Activated T-helper 2 cell treated with anti-CD3 and anti-CD28 coated beads, Interferon-gamma antibody, Interleukin-2, Interleukin-4, amounts not matched to agents 10 μg/mL and 5 μg/mL and 100 μg/mL, durations not matched to agents 14 hours and 24 hours and 36 hours (primary cell): ENCODE measurements at regions of chr22 and their contacts with region 1.

Region 1: DNA sequence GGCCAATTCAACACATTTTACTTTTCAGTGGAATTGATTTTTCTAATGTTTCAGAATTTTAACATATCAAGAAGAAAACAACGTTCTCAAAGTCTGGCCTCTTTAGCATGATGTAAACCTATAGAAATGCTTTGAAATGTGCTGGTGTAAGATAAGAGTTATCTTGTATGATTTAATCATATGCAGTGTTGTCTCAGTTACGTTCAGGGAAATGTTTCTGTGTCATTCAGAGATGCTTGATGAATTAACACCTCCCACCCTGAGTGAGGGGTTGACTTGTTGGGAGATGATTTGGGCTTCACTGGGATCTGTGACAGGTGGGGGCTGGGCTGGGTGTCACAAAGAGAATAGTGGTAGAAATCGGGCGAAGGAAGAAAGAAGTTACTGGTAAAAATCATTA is 15.7 kb upstream of the MYO18B start:
- DNase-seq: no peak
- H3K4me3 Mint-ChIP-seq: peak overlapping the region; percentile 24
- H3K27ac Mint-ChIP-seq: peak overlapping the region; percentile 96
- H3K4me1 Mint-ChIP-seq: peaks cover 42% of the 10 kb centered on the region
- H3K27me3 Mint-ChIP-seq: no peaks in the 10 kb centered on the region

Region 2: DNA sequence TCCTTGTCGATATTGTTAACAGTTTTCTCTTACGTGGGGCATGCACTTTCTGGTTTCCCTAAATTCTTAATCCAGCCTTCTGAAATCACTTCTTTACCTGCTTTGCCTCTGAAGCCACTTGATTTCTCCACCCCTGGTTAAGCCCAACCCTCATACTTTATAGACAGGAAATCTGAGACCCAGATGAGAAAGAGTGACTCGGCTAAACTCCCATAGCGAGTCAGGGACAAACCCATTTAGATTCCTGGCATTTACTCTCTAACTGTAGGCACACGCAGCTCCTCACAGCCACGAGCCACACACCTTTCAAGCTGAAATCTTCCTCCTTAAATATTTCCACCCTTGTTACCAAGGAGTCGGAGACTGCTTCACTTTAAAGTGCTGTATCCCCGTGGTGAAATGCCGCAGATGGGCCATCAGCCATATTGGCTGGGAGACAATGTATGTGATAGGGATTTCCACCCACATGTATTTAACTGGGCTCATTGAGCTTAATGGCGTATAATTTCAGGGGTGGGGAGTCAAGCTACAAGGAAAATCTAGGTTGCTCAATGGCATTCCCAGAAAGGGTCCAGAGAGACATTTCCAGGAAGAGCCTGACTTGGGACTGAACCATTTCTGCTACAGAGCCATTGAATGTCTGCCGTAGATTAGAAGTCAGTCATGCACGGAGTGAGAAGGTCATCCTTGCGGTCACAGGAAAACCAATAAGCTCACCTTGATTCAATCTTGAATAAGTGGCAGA is 211.6 kb before region 1 on chr22:
- intact Hi-C with region 1: no loop called
- DNase-seq: no peak
- H3K4me3 Mint-ChIP-seq: no peak overlapping the region
- H3K27ac Mint-ChIP-seq: no peak overlapping the region
- H3K4me1 Mint-ChIP-seq: no peaks in the 10 kb centered on the region
- H3K27me3 Mint-ChIP-seq: peaks cover 2% of the 10 kb centered on the region

Region 3: DNA sequence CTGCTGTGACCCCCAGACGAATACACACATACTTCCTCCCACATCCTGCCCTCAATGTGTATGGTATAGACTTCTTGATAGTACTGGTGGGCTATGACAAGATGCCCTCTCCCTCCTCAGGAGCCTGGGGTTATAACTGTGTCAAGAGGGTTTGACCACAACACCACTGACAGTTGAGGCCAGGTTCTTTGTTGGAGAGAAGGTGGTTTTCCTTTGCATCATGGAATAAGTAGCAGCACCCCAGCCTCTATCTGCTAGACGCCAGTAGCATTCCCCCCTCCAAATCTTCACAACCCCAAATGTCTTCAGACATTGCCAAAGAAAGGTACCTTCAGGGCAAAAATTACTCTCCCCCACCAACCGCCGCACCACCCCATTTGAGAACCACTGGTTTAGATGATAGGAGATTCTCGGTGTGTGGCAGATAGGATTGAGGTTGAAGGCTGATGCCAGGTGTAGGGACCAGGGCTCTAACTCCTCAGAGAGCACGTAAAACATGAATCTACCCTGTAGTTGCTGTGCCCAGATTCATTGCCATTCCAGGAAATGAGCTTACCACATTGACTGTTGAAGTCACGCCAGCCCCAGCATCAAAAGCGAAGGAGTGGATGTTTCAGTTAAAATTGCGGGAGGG is 10.3 kb after region 1 on chr22:
- intact Hi-C with region 1: loop called (anchors 1 kb)
- DNase-seq: peak; percentile 74
- H3K4me3 Mint-ChIP-seq: peak overlapping the region; percentile 54
- H3K27ac Mint-ChIP-seq: peak overlapping the region; percentile 99
- H3K4me1 Mint-ChIP-seq: peaks cover 56% of the 10 kb centered on the region
- H3K27me3 Mint-ChIP-seq: no peaks in the 10 kb centered on the region

Region 4: DNA sequence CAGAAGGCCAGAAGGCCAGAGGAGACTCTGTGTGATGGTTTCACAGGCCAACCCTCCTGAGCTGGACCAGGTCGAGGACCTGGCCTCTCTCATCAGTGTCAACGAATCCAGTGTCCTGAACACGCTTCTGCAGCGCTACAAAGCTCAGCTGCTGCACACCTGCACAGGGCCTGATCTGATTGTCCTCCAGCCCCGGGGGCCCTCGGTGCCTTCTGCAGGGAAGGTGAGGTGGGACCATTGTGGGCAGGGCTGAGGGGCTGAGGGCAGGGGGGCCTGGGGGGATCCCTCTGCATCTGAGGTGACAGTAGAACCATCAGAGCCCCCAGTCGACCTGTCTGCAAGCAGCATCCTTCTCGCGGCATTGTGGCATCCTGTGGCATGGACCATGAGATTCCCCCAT is 46.0 kb after region 1 on chr22:
- intact Hi-C with region 1: loop called (anchors 2 kb)
- DNase-seq: no peak
- H3K4me3 Mint-ChIP-seq: no peak overlapping the region
- H3K27ac Mint-ChIP-seq: peak overlapping the region; percentile 84
- H3K4me1 Mint-ChIP-seq: peaks cover 30% of the 10 kb centered on the region
- H3K27me3 Mint-ChIP-seq: no peaks in the 10 kb centered on the region

Region 5: GRCh38 chr22:25942856-25943411 is 216.7 kb after region 1 on chr22:
- intact Hi-C with region 1: no loop called
- DNase-seq: no peak
- H3K4me3 Mint-ChIP-seq: no peak overlapping the region
- H3K27ac Mint-ChIP-seq: no peak overlapping the region
- H3K4me1 Mint-ChIP-seq: no peaks in the 10 kb centered on the region
- H3K27me3 Mint-ChIP-seq: no peaks in the 10 kb centered on the region